ENCODE measurements at regions of chr3 and their contacts with region 1.

Region 1: DNA sequence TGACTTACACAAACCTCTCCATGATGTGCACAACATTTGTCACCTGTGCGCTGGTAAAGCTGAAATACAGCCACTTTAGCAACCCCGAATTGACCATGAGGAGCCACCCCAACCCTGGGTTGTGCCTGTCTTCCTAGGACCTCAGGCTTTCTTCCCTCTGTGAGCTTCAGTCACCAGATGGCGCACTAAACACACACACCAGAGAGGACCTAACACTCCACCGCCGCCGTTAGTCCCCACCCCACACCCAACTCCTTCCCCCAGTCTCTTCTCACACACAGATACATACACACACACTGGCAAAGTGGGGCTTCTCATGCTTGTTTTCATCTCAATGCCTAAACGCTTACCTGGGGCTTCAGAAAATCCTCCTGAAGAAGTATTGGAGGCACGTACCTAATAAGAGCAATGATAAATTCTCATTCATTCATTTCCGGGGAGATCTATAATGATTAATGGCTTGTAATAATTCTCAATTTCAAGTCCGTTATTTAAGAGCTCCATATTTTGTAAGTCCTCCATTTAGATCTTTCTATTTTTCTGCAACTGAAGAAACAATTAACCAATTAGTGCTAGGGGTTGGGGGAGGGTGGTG is 2.1 kb upstream of the CCDC80 start:
- DNase-seq: peak; percentile 81
- CTCF ChIP-seq: peak; percentile 70

Region 2: DNA sequence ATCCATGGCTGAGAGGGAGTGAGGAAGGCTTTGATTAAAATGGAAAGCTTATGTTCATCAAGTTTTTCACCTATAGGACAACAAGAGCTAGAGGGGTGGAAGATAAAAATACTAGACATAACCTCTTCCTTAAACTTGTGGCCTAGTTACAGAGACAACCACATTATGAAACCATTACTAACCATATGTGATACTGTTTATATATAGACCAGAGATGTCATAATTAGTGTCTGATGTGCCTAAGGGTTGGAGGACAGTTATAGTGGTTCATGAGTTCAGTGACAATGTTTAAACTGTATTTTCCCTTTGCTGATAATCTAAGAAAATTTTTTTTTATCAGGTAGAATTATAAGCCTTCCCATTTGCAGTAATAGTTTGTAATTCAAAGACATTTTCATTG is 760.2 kb before region 1 on chr3:
- in situ Hi-C with region 1: no loop called
- DNase-seq: peak; percentile 12
- CTCF ChIP-seq: no peak

Region 3: DNA sequence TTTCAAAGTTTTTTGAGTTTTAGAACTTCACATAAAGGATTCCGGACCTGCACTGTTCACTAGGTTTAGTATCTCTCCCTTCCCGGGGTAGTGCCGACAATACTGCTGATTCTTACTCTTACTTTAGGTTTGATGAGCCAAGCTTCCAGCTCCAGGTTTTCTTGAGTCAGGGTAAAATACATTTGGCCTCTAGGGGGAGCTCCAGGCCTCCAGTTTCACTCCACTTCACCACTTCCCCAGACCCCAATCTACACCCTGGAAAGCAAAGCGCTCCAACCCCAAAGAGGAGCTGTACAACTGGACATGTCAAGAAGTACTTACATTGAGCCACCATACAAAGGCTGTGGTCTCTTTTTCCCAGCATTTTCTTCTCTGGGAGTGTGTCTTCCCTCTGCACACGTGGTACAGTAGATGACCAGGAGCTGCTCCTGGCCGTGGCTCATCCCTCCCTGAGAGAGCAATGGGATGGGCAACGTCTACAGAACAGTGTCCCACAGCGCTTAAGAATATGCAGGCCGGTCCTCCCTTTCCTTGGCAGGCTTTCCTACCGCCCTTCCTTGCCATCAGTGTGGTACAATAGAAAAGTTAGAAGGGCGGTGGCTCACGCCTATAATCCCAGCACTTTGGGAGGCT is 91.8 kb after region 1 on chr3:
- in situ Hi-C with region 1: loop called (anchors 10 kb)
- DNase-seq: peak; percentile 63
- CTCF ChIP-seq: peak; percentile 58

Region 4: GRCh38 chr3:112979240-112979832 is 336.3 kb after region 1 on chr3:
- in situ Hi-C with region 1: loop called (anchors 5 kb)
- DNase-seq: no peak
- CTCF ChIP-seq: peak; percentile 10

Region 5: GRCh38 chr3:113287803-113288648 is 645.0 kb after region 1 on chr3:
- in situ Hi-C with region 1: loop called (anchors 25 kb)
- DNase-seq: peak; percentile 67
- CTCF ChIP-seq: peak; percentile 89